A673 (cell line): ENCODE measurements at regions of chr2 and their contacts with region 1.

Region 1: GRCh38 chr2:19362755-19363473 is 4.5 kb upstream of the OSR1 start:
- DNase-seq: peak; percentile 89
- H3K4me3 ChIP-seq: peak overlapping the region; percentile 55
- H3K27ac ChIP-seq: no peak overlapping the region
- H3K4me1 ChIP-seq: peaks cover 7% of the 10 kb centered on the region
- H3K27me3 ChIP-seq: peaks cover 92% of the 10 kb centered on the region
- CTCF ChIP-seq: peak; percentile 80

Region 2: GRCh38 chr2:18387441-18388206 is 975.3 kb before region 1 on chr2:
- CTCF ChIA-PET with region 1: no interaction called
- POLR2A ChIA-PET with region 1: no interaction called
- intact Hi-C with region 1: loop called (anchors 5 kb)
- DNase-seq: peak; percentile 80
- H3K4me3 ChIP-seq: no peak overlapping the region
- H3K27ac ChIP-seq: no peak overlapping the region
- H3K4me1 ChIP-seq: no peaks in the 10 kb centered on the region
- H3K27me3 ChIP-seq: no peaks in the 10 kb centered on the region
- CTCF ChIP-seq: peak; percentile 92

Region 3: GRCh38 chr2:18435421-18436037 is 927.4 kb before region 1 on chr2:
- CTCF ChIA-PET with region 1: no interaction called
- POLR2A ChIA-PET with region 1: no interaction called
- intact Hi-C with region 1: loop called (anchors 5 kb)
- DNase-seq: peak; percentile 74
- H3K4me3 ChIP-seq: no peak overlapping the region
- H3K27ac ChIP-seq: no peak overlapping the region
- H3K4me1 ChIP-seq: peaks cover 5% of the 10 kb centered on the region
- H3K27me3 ChIP-seq: no peaks in the 10 kb centered on the region
- CTCF ChIP-seq: peak; percentile 76

Region 4: DNA sequence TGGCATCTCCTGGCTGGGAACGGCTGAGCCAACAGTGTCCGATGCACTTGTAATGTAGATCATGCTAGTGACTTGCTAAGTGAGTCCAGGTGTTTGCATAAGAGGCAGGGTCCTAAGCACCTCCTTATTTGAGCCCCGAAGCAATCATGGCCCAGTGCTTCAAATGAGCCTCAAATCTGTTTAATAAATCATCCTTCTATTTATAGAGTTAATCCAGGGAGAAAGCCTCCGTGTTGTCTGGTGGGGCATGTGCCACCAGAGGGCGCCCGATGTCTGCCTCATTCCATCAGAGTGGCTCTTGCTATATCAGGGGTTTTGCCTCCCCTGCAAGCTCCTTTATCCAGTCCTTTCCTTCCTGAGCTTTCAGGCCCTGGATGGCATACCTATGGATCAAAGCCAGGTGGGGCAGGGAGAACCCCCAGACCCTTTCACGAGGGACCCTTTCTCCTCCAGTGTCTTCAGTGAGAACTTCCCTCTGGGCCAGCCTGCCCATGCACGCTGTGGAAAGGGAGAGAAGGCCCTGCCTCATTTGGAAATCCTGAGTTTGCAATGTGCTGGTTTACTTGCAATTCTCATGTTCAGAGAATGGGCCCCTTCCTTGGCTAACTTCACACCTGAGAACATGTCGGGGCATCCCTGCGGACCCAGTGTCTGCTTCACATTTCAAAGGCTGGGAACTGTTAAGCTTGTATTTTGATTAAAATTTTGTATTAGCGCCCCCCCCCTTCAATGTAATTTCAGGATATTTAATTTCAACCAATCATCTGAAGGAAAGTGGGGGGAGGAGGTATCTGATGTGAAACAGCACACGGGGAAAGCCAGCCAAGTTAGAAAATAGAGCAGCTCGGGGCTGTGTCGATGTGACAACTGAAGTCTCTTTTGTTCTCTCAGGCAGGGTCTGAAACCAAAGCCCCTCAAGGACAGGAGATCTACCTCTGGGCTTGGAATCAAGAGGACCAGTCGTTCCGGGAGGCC is 842.2 kb before region 1 on chr2:
- CTCF ChIA-PET with region 1: no interaction called
- POLR2A ChIA-PET with region 1: no interaction called
- intact Hi-C with region 1: loop called (anchors 2 kb)
- DNase-seq: peak; percentile 81
- H3K4me3 ChIP-seq: no peak overlapping the region
- H3K27ac ChIP-seq: no peak overlapping the region
- H3K4me1 ChIP-seq: no peaks in the 10 kb centered on the region
- H3K27me3 ChIP-seq: no peaks in the 10 kb centered on the region
- CTCF ChIP-seq: peak; percentile 95

Region 5: GRCh38 chr2:18749912-18750526 is 612.9 kb before region 1 on chr2:
- CTCF ChIA-PET with region 1: no interaction called
- POLR2A ChIA-PET with region 1: no interaction called
- intact Hi-C with region 1: loop called (anchors 1 kb)
- DNase-seq: peak; percentile 65
- H3K4me3 ChIP-seq: no peak overlapping the region
- H3K27ac ChIP-seq: no peak overlapping the region
- H3K4me1 ChIP-seq: no peaks in the 10 kb centered on the region
- H3K27me3 ChIP-seq: peaks cover 6% of the 10 kb centered on the region
- CTCF ChIP-seq: peak; percentile 88

Region 6: GRCh38 chr2:19667085-19667484 is 304.2 kb after region 1 on chr2:
- CTCF ChIA-PET with region 1: no interaction called
- POLR2A ChIA-PET with region 1: no interaction called
- intact Hi-C with region 1: loop called (anchors 5 kb)
- DNase-seq: peak; percentile 32
- H3K4me3 ChIP-seq: no peak overlapping the region
- H3K27ac ChIP-seq: no peak overlapping the region
- H3K4me1 ChIP-seq: peaks cover 8% of the 10 kb centered on the region
- H3K27me3 ChIP-seq: peaks cover 16% of the 10 kb centered on the region
- CTCF ChIP-seq: peak; percentile 47

Region 7: DNA sequence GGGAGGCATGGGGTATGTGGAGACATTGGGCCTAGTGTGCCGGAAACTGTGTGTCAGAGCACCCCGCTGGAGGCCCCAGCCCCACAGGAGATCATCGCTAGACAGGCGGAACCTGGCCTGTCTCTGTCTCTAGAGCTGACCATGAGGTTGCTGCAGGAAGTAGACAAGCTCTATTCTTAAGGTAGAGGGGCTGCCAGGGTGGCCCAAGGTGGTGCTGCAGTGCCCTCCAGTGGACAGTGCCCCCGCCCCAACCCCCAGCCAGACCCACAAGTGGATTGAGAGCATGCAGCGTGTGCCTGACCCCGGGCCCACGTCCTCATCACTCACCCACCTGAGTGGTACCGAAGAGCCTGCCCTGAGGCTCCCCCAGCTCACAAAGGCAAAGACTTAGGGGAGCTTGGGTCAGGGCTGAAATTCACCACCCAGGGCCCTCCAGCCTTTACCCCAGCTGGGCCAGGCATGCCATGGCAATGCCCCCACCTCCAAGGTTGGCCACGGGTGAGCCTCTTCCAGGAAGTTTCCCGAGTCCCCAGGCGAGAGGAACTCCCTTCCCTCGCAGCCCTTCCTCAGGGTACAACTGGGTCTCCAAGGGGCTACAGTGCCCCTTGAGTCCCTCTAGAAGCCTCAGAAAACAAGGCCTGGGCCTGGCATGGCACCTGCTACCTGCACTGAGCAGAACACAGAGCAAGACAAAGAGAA is 383.8 kb after region 1 on chr2:
- CTCF ChIA-PET with region 1: no interaction called
- POLR2A ChIA-PET with region 1: no interaction called
- intact Hi-C with region 1: loop called (anchors 5 kb)
- DNase-seq: peak; percentile 35
- H3K4me3 ChIP-seq: no peak overlapping the region
- H3K27ac ChIP-seq: no peak overlapping the region
- H3K4me1 ChIP-seq: no peaks in the 10 kb centered on the region
- H3K27me3 ChIP-seq: no peaks in the 10 kb centered on the region
- CTCF ChIP-seq: peak; percentile 54

Region 8: GRCh38 chr2:19863303-19864041 is 500.6 kb after region 1 on chr2:
- CTCF ChIA-PET with region 1: no interaction called
- POLR2A ChIA-PET with region 1: no interaction called
- intact Hi-C with region 1: no loop called
- DNase-seq: peak; percentile 54
- H3K4me3 ChIP-seq: no peak overlapping the region
- H3K27ac ChIP-seq: no peak overlapping the region
- H3K4me1 ChIP-seq: no peaks in the 10 kb centered on the region
- H3K27me3 ChIP-seq: peaks cover 6% of the 10 kb centered on the region
- CTCF ChIP-seq: peak; percentile 94